Common myeloid progenitor, CD34-positive (primary cell): ENCODE measurements at regions of chr1 and their contacts with region 1.

Region 1: GRCh38 chr1:11749203-11749689 is 12.7 kb upstream of the C1orf167 start:
- DNase-seq: peak; percentile 47 to 67 (median 54)
- H3K4me3 ChIP-seq: no peak overlapping the region
- H3K27ac ChIP-seq: no peak overlapping the region
- H3K4me1 ChIP-seq: peaks cover 0 to 6% (median 0%) of the 10 kb centered on the region in 4 experiments
- H3K27me3 ChIP-seq: no peaks in the 10 kb centered on the region

Region 2: GRCh38 chr1:11207898-11208611 is 541.2 kb before region 1 on chr1:
- CTCF ChIA-PET with region 1: no interaction called
- POLR2A ChIA-PET with region 1: no interaction called
- DNase-seq: no peak
- H3K4me3 ChIP-seq: no peak overlapping the region
- H3K27ac ChIP-seq: no peak overlapping the region
- H3K4me1 ChIP-seq: no peaks in the 10 kb centered on the region
- H3K27me3 ChIP-seq: no peaks in the 10 kb centered on the region

Region 3: GRCh38 chr1:11735854-11736745 is 13.1 kb before region 1 on chr1 and contains the start of gene AGTRAP:
- CTCF ChIA-PET with region 1: interaction called, 13 read pairs
- POLR2A ChIA-PET with region 1: no interaction called
- DNase-seq: peak; percentile 86 to 94 (median 94)
- H3K4me3 ChIP-seq: peak within 1 kb of the TSS; percentile 48 to 91 (median 78)
- H3K27ac ChIP-seq: peak within 1 kb of the TSS; percentile 25 to 72
- H3K4me1 ChIP-seq: peaks cover 17 to 75% (median 66%) of the 10 kb centered on the region in 4 experiments
- H3K27me3 ChIP-seq: no peaks in the 10 kb centered on the region

Region 4: GRCh38 chr1:11784993-11785769 is 35.9 kb after region 1 on chr1:
- CTCF ChIA-PET with region 1: no interaction called
- POLR2A ChIA-PET with region 1: no interaction called
- DNase-seq: peak in 2 of 3 donors; percentile 18 to 28
- H3K4me3 ChIP-seq: peak overlapping the region in 5 of 7 experiments; percentile 13 to 68 (median 61)
- H3K27ac ChIP-seq: no peak overlapping the region
- H3K4me1 ChIP-seq: peaks cover 0 to 10% (median 8%) of the 10 kb centered on the region in 4 experiments
- H3K27me3 ChIP-seq: no peaks in the 10 kb centered on the region